AG04450 (cell line): ENCODE measurements at regions of chr19 and their contacts with region 1.

Region 1: DNA sequence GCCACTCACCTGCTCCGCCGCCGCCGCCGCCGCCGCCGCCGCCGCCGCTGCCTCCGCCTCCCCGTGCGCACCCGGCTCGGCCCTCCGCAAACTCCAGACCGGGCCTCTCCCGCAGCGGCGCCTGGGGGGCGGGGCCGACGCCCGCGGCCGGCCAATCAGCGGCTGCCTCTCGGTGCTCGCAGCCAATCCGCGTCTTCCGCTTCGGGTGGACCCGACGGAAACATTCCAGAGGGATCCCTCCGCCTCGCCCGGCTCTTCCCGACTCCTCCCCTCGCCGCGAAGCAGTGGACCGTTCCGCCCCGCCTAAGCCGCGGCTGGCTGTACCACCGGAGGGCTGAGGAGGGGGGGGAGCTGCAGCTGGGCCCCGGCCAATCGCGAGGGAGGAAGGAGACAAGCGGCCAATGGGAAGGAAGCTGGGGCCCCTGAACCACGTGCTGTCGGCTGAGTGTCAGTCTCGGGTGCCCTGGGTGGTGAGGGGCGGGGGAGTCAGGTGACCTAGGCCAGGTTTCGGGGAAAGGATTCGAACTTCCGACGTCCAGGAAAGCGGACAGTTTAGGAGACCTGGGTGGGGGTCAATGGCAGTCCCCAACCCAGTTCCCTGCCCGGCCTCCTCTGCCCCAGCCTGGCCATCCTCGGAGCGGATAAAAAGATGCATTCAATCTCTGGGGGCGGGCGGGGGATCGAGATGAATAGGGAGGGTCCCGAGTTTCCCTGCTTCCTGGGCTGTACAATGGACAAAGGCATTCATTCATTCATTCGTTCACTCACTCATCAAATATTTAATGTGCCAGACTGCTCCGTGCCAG is at the start of gene GIPC1:
- DNase-seq: peak; percentile 98
- H3K4me3 ChIP-seq: peak within 1 kb of the TSS; percentile 78
- H3K27ac ChIP-seq: no peak within 1 kb of the TSS
- H3K27me3 ChIP-seq: no peaks in the 10 kb centered on the region
- CTCF ChIP-seq: no peak
- polyA plus RNA-seq, gene GIPC1: 47.4 and 59.8 TPM in 2 replicates

Region 2: DNA sequence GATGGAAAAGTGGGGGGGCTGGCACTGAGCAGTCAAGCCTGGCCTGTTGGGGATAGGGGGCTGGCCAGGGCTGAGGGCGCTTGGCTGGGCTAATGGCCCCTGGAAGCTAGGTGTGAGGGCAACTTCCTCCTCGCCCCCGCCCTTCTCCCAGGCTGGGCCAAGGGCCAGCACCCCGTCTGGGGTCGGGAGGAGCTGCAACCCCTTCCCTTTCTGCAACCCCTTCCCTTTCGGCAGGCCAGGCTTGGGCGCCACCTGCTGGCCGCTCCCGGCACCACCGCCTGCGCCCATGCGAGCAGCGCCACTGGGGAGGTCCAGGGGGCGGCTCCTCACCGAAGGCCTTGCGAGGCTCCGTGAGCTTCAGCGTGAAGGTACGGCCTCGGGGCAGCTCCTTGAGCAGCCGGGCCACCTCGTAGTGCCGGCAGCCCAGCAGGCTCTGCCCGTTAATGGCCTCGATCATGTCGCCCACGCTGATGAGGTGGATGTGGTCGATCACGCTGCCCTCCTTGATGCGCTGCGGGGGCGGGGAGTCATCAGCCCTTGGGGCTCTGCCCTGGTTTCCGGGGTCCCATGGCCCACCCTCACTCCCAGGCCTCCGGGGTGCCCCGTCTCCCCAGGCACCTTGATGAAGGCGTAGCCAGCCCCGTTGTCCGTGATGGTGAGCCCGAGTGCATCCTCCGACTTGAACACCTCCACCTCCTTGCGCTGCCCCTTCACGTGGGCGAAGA is 16.1 kb before region 1 on chr19:
- CTCF ChIA-PET with region 1: interaction called, 30 read pairs
- POLR2A ChIA-PET with region 1: interaction called, 7 read pairs
- DNase-seq: no peak
- H3K4me3 ChIP-seq: no peak overlapping the region
- H3K27ac ChIP-seq: peak overlapping the region; percentile 61
- H3K27me3 ChIP-seq: no peaks in the 10 kb centered on the region
- CTCF ChIP-seq: peak; percentile 82

Region 3: DNA sequence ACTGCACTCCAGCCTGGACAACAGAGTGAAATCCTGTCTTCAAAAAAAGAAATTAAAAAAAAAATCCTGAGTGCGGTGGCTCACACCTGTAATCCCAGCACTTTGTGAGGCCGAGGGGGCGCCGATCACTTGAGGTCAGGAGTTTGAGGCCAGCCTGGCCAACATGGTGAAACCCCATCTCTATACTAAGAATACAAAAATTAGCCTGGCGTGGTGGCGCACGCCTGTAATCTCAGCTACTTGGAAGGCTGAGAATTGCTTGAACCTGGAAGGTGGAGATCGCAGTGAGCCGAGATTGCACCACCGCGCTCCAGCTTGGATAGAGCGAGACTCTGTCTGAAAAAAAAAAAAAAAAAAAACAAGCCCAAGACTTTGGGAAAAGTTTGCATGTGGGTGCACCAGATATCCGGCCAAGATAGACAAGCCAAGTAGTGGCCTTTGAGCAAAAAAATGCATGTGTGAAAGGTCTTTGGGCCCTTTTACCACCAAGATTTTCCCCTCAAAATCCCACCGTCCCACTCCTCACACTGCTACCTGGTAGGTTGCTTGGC is 16.3 kb after region 1 on chr19:
- CTCF ChIA-PET with region 1: no interaction called
- POLR2A ChIA-PET with region 1: interaction called, 27 read pairs
- DNase-seq: no peak
- H3K4me3 ChIP-seq: no peak overlapping the region
- H3K27ac ChIP-seq: no peak overlapping the region
- H3K27me3 ChIP-seq: no peaks in the 10 kb centered on the region
- CTCF ChIP-seq: no peak

Region 4: GRCh38 chr19:14517840-14518505 is 21.7 kb after region 1 on chr19 and contains the start of gene DNAJB1:
- CTCF ChIA-PET with region 1: no interaction called
- POLR2A ChIA-PET with region 1: interaction called, 27 read pairs
- DNase-seq: no peak
- H3K4me3 ChIP-seq: peak within 1 kb of the TSS; percentile 94
- H3K27ac ChIP-seq: peak within 1 kb of the TSS; percentile 94
- H3K27me3 ChIP-seq: no peaks in the 10 kb centered on the region
- CTCF ChIP-seq: no peak
- polyA plus RNA-seq, gene DNAJB1: 80.6 and 88.3 TPM in 2 replicates

Region 5: DNA sequence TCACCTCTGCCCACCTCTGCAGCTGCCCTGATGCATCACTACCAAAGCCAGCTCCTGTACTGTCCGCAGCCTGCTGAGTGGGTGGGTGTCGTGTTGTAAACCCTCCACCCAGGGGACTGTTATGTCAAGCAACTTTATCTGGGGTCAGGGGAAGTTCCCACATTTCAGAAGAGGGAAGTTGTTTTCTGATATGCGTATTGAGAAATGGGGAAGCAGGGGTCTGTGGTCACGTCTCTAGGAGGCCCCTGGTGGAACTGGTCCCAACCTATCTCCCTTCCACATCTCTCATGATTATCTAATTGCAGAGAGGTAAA is 117.8 kb after region 1 on chr19:
- CTCF ChIA-PET with region 1: no interaction called
- POLR2A ChIA-PET with region 1: no interaction called
- DNase-seq: no peak
- H3K4me3 ChIP-seq: no peak overlapping the region
- H3K27ac ChIP-seq: no peak overlapping the region
- H3K27me3 ChIP-seq: no peaks in the 10 kb centered on the region
- CTCF ChIP-seq: no peak